MCF 10A (cell line): ENCODE measurements at regions of chr6 and their contacts with region 1.

Region 1: GRCh38 chr6:4018172-4018905 is 60.6 kb downstream of the FAM217A start:
- DNase-seq: peak; percentile 97
- H3K4me3 Mint-ChIP-seq: peak overlapping the region; percentile 96
- H3K27ac Mint-ChIP-seq: peak overlapping the region; percentile 97
- H3K4me1 Mint-ChIP-seq: peaks cover 42% of the 10 kb centered on the region
- H3K27me3 Mint-ChIP-seq: no peaks in the 10 kb centered on the region
- CTCF ChIP-seq: peak; percentile 39

Region 2: DNA sequence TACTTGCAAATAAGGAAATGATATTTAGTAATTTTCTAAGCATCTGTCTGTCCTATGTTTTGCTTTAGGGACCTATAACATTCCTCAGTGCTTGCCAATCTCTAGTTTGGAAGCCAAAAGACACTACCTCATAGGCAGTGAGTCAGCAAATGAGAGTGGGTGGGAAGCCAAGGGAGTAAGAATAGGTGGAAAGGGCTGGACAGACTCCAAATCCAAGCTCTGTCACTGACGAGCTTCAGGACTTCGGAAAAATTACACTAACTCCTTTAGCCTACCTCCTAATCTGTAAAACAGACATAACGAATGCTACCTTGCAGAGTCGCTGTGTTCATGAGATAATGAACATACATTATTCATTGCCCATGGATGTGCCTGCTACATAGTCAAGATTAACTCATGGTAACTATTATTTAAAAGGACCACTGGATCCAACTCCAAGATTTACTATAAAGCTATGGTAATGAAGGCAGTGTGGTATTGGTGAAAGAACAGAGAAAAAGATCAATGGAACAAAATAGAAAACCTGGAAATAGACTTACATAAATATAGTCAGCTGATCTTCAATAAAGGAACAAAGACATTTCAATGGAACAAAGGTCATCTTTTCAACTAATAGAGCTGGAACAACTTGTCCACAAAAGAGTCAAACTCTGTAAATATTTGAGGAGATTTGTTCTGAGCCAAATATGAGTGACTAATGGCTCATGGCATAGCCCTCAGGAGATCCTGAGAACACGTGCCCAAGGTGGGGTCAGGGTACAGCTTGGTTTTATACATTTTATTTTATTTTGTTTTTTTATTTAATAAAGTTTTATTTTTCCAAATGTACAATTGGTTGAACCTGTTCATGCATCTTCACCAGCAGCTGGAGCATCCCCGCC is 105.0 kb before region 1 on chr6:
- CTCF ChIA-PET with region 1: interaction called, 3 read pairs
- POLR2A ChIA-PET with region 1: interaction called, 13 read pairs
- intact Hi-C with region 1: no loop called
- DNase-seq: peak; percentile 99
- H3K4me3 Mint-ChIP-seq: peak overlapping the region; percentile 41
- H3K27ac Mint-ChIP-seq: peak overlapping the region; percentile 93
- H3K4me1 Mint-ChIP-seq: peaks cover 48% of the 10 kb centered on the region
- H3K27me3 Mint-ChIP-seq: no peaks in the 10 kb centered on the region
- CTCF ChIP-seq: no peak

Region 3: DNA sequence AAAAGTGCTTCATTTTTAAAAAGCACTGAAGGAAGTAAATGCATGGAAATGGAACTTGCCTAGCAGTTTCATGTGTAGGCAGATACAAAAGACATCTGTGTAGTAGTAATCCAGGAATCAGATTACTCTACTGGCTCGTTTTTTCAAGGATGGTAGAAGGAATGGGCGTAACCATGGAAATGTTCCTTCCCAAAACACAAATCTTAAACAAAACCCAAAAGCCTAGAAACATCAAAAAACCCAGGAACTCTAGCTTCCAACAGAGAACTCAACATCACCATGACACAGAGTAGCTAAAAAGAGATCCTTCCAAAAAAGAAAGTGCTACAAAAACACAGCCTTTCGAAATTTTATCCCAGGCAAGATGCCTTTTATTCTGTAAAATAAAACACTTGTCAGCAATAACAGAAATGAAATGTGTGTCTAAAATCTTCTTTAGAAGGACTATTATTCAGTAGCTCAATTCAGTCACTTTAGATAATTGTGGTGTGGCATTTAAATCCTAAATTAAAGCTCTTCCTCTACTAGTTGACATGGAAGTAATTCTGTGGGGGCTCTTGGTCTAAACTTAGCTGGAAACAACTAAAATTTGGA is 21.1 kb before region 1 on chr6:
- CTCF ChIA-PET with region 1: interaction called, 5 read pairs
- POLR2A ChIA-PET with region 1: interaction called, 16 read pairs
- intact Hi-C with region 1: no loop called
- DNase-seq: no peak
- H3K4me3 Mint-ChIP-seq: no peak overlapping the region
- H3K27ac Mint-ChIP-seq: no peak overlapping the region
- H3K4me1 Mint-ChIP-seq: peaks cover 19% of the 10 kb centered on the region
- H3K27me3 Mint-ChIP-seq: no peaks in the 10 kb centered on the region
- CTCF ChIP-seq: no peak

Region 4: GRCh38 chr6:4055420-4056041 is 37.2 kb after region 1 on chr6:
- CTCF ChIA-PET with region 1: interaction called, 8 read pairs
- POLR2A ChIA-PET with region 1: interaction called, 19 read pairs
- intact Hi-C with region 1: no loop called
- DNase-seq: peak; percentile 80
- H3K4me3 Mint-ChIP-seq: no peak overlapping the region
- H3K27ac Mint-ChIP-seq: peak overlapping the region; percentile 44
- H3K4me1 Mint-ChIP-seq: peaks cover 26% of the 10 kb centered on the region
- H3K27me3 Mint-ChIP-seq: no peaks in the 10 kb centered on the region
- CTCF ChIP-seq: peak; percentile 68

Region 5: DNA sequence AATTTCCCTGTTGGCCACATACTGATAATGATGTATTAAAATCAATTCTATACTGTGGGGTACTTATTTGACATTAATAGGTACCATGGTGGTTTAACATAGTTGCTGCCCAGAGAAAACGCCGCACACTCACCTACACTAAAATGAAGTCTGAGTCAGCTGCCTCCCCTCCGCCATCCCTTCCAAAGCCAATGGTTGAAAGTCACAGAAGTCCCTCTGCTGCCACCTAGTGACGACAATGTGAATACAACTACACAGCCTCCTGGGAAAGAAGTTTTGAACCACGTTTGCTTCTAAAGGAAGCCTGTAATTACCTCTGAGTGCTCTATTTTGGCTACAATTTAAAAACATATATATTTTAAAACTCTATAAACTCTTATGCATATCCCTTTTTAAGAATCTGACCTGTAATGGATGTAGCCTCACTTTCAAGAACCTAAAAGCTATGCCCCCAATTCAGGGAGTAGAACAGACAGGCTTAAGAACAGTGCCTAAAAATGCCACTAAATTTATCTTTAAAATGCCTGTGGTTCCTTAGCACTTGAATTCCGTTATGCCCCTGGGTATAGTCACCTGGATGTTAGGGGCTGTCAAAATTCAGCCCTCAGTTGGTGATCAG is 137.6 kb after region 1 on chr6:
- CTCF ChIA-PET with region 1: interaction called, 3 read pairs
- POLR2A ChIA-PET with region 1: interaction called, 7 read pairs
- intact Hi-C with region 1: loop called (anchors 5 kb)
- DNase-seq: peak; percentile 91
- H3K4me3 Mint-ChIP-seq: no peak overlapping the region
- H3K27ac Mint-ChIP-seq: no peak overlapping the region
- H3K4me1 Mint-ChIP-seq: no peaks in the 10 kb centered on the region
- H3K27me3 Mint-ChIP-seq: no peaks in the 10 kb centered on the region
- CTCF ChIP-seq: peak; percentile 71